T-cell (primary cell): ENCODE measurements at regions of chr10 and their contacts with region 1.

Region 1: GRCh38 chr10:93352638-93353383 is 129.3 kb downstream of the MYOF start:
- DNase-seq: peak in 2 of 35 experiments; percentile 4 to 58
- ATAC-seq: no peak
- H3K4me3 ChIP-seq: no peak overlapping the region
- H3K4me3 Mint-ChIP-seq: no peak overlapping the region
- H3K27ac ChIP-seq: no peak overlapping the region
- H3K27ac Mint-ChIP-seq: no peak overlapping the region
- H3K4me1 ChIP-seq: no peaks in the 10 kb centered on the region
- H3K4me1 Mint-ChIP-seq: peaks cover 0 to 4% (median 0%) of the 10 kb centered on the region in 3 donors
- H3K27me3 ChIP-seq: peaks cover 0 to 3% of the 10 kb centered on the region in 2 experiments
- H3K27me3 Mint-ChIP-seq: peaks cover 9 to 14% of the 10 kb centered on the region in 2 donors

Region 2: GRCh38 chr10:92886334-92886961 is 466.4 kb before region 1 on chr10:
- CTCF ChIA-PET with region 1: interaction called, 11 to 13 read pairs
- POLR2A ChIA-PET with region 1: no interaction called
- DNase-seq: no peak
- ATAC-seq: no peak
- H3K4me3 ChIP-seq: no peak overlapping the region
- H3K4me3 Mint-ChIP-seq: no peak overlapping the region
- H3K27ac ChIP-seq: no peak overlapping the region
- H3K27ac Mint-ChIP-seq: no peak overlapping the region
- H3K4me1 ChIP-seq: no peaks in the 10 kb centered on the region
- H3K4me1 Mint-ChIP-seq: peaks cover 5 to 6% (median 5%) of the 10 kb centered on the region in 3 donors
- H3K27me3 ChIP-seq: no peaks in the 10 kb centered on the region
- H3K27me3 Mint-ChIP-seq: no peaks in the 10 kb centered on the region

Region 3: GRCh38 chr10:93368210-93368609 is 15.4 kb after region 1 on chr10:
- CTCF ChIA-PET with region 1: interaction called, 7 to 15 read pairs
- POLR2A ChIA-PET with region 1: interaction called in 1 of 2 experiments, 20 read pairs
- DNase-seq: no peak
- ATAC-seq: no peak
- H3K4me3 ChIP-seq: no peak overlapping the region
- H3K4me3 Mint-ChIP-seq: no peak overlapping the region
- H3K27ac ChIP-seq: no peak overlapping the region
- H3K27ac Mint-ChIP-seq: no peak overlapping the region
- H3K4me1 ChIP-seq: no peaks in the 10 kb centered on the region
- H3K4me1 Mint-ChIP-seq: peaks cover 0 to 3% (median 3%) of the 10 kb centered on the region in 3 donors
- H3K27me3 ChIP-seq: peaks cover 0 to 4% of the 10 kb centered on the region in 2 experiments
- H3K27me3 Mint-ChIP-seq: peaks cover 0 to 1% of the 10 kb centered on the region in 2 donors